ENCODE measurements at regions of chr7 and their contacts with region 1.

Region 1: DNA sequence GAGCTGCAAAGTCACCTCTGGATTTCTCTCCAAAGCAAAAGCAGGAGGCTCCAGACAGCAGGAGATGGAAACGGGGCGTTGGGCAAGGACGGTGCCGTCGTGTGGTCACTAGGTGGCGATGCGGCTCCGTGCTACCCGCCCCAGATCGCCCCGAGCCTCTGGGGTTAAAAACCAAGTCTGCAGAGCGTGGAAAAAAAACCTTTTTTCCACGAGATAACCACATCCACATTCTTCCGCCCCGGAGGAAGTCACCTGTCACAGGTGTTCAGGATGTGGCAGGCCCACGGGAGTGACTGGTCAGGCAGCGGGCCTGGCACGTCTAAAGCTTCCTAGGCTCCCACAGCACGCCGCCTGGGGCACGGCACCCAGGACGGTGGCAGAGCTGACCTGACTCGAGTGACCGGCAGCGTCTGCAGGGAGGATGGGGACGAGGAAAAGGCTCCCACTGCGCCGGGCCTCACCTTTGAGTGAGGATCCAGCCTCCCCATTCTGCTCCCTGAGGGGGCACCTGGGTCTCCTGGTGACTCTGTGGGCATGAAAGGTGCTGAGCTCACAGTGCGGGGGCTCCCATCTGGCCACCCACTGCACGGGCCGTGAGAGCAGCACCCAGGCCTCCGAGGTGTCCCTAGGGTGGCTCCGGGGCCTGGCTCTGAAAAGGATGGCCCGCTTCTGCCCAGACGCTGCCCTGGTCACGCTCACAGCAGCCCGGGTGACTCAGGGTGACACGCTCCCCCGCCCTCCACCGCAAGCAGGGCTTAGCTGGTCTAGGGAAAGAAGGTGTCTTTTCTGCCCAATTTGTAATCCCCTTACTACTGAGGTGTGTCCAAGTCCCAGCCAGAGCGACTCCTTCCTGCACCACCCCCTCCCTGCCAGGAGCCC is 71.3 kb upstream of the TNRC18 start:
- DNase-seq: peak; percentile 86 to 91 (median 89)
- H3K4me3 ChIP-seq: peak overlapping the region in 1 of 3 donors; percentile 17
- H3K27ac ChIP-seq: no peak overlapping the region
- H3K4me1 ChIP-seq: peaks cover 0 to 9% (median 0%) of the 10 kb centered on the region in 3 donors
- H3K27me3 ChIP-seq: no peaks in the 10 kb centered on the region
- CTCF ChIP-seq: peak; percentile 96

Region 2: DNA sequence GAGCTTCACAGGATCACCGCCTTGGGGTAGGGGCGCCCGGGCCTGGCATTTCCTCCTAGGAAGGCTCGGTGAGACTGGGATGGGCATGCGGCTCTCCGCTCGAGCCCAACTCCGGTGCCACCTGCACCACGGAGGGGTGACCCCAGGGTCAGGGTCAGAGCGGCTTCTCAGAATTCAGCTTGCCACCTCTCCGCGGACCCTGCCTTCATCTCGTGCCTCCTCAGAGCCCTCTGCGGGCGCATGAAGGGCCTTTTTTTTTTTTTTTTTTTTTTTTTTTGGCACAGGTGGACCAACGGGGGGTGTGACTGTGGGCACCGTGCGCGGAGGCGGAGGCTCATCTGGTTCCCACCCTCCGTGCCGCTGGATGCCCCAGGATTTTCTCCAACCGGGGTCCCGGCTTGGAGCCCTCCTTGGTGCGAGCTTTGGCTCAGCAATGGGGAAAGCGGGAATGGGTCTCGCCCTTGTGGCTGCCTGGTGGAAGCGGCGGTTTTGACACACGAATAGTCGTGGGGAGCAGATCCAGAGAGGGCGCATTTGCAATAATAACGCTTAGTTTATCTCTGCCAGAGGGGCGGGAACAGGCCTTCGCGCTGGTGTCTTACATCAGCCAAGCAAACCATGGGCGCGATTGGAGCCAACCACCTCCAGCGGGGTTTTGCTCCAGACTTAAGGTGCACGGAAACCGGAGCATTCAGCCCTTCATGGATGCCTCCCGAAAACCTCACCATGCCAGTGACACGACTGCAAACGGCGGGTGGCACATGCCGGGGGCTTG is 66.3 kb before region 1 on chr7:
- intact Hi-C with region 1: no loop called
- DNase-seq: peak in 4 of 5 donors; percentile 47 to 83 (median 66)
- H3K4me3 ChIP-seq: peak overlapping the region; percentile 38 to 93 (median 53)
- H3K27ac ChIP-seq: peak overlapping the region; percentile 99
- H3K4me1 ChIP-seq: peaks cover 0 to 17% (median 4%) of the 10 kb centered on the region in 3 donors
- H3K27me3 ChIP-seq: no peaks in the 10 kb centered on the region
- CTCF ChIP-seq: no peak

Region 3: GRCh38 chr7:5677538-5678294 is 182.8 kb after region 1 on chr7:
- intact Hi-C with region 1: loop called (anchors 10 kb)
- DNase-seq: peak; percentile 60 to 81 (median 77)
- H3K4me3 ChIP-seq: peak overlapping the region in 1 of 3 donors; percentile 26
- H3K27ac ChIP-seq: peak overlapping the region; percentile 15 to 68
- H3K4me1 ChIP-seq: peaks cover 5 to 20% (median 17%) of the 10 kb centered on the region in 3 donors
- H3K27me3 ChIP-seq: no peaks in the 10 kb centered on the region
- CTCF ChIP-seq: peak; percentile 74

Region 4: DNA sequence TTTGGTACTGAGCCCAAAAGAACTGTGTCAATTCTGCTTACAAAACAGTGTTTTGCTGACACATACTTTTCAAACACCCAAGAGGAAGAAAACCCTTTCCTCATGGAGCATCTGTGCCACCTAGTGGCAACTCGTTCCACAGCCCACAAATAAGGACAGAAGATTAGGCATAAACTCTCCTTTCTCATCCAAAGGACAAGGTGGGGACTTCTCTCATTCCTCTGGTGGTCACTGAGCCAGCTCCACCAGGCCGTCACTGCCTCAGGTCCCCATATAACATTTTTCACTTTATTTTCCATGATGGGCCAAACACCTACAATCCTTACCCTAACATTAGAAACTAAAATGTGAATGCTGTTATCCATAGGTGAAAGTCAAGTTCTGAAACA is 209.6 kb after region 1 on chr7:
- intact Hi-C with region 1: loop called (anchors 10 kb)
- DNase-seq: peak in 4 of 5 donors; percentile 68 to 93 (median 87)
- H3K4me3 ChIP-seq: peak overlapping the region in 1 of 3 donors; percentile 3
- H3K27ac ChIP-seq: no peak overlapping the region
- H3K4me1 ChIP-seq: peaks cover 4 to 24% (median 19%) of the 10 kb centered on the region in 3 donors
- H3K27me3 ChIP-seq: no peaks in the 10 kb centered on the region
- CTCF ChIP-seq: peak; percentile 97

Region 5: DNA sequence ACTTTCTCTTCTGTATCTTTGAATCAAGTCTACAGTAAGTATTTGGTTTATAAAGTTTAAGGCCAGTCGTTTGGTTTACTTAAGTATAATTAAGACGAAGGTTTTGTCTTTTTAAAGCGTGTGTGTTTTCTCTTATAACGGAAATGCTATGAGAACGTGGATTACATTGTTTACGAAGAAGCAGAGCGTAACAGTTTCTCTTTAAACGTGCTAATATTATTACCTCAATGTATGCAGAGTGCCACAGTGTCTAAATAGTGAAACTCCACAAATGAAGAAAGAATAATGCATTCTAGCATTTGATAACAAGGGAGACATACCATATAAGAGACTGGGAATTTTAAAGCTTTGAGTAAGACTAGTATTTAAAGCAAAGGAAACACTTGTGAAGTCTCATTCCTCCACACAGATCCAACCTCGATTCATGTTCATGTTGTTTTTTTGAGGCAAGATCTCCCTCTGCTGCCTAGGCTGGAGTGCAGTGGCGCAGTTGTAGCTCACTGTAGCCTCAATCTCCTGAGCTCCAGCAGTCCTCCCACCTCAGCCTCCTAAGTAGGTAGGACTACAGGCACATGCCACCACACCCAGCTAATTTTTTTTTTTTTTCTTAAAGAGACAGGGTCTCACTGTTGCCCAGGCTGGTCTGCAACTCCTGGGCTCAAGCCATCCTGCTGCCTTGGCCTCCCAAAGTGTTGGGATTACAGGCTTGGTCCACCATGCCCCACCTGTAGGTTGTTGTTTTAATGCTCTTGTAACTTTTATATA is 611.4 kb after region 1 on chr7:
- intact Hi-C with region 1: no loop called
- DNase-seq: peak in 1 of 5 donors; percentile 22
- H3K4me3 ChIP-seq: peak overlapping the region; percentile 71 to 86 (median 75)
- H3K27ac ChIP-seq: peak overlapping the region; percentile 71 to 76
- H3K4me1 ChIP-seq: peaks cover 2 to 11% (median 4%) of the 10 kb centered on the region in 3 donors
- H3K27me3 ChIP-seq: no peaks in the 10 kb centered on the region
- CTCF ChIP-seq: peak; percentile 14